CD8-positive, alpha-beta T cell (primary cell): ENCODE measurements at regions of chr1 and their contacts with region 1.

Region 1: GRCh38 chr1:247131236-247131635 is 27.1 kb upstream of the ZNF669 start:
- DNase-seq: no peak
- ATAC-seq: no peak
- H3K4me3 ChIP-seq: no peak overlapping the region
- H3K4me3 Mint-ChIP-seq: no peak overlapping the region
- H3K27ac ChIP-seq: no peak overlapping the region
- H3K27ac Mint-ChIP-seq: no peak overlapping the region
- H3K4me1 ChIP-seq: peaks cover 4% of the 10 kb centered on the region
- H3K4me1 Mint-ChIP-seq: peaks cover 6% of the 10 kb centered on the region
- H3K27me3 ChIP-seq: no peaks in the 10 kb centered on the region
- H3K27me3 Mint-ChIP-seq: no peaks in the 10 kb centered on the region
- CTCF ChIP-seq: no peak

Region 2: GRCh38 chr1:247007511-247008405 is 123.5 kb before region 1 on chr1 and contains the start of gene ZNF695:
- CTCF ChIA-PET with region 1: no interaction called
- POLR2A ChIA-PET with region 1: no interaction called
- intact Hi-C with region 1: no loop called
- DNase-seq: peak; percentile 2 to 70 (median 34)
- ATAC-seq: peak; percentile 96
- H3K4me3 ChIP-seq: peak within 1 kb of the TSS in 1 of 2 experiments; percentile 37
- H3K4me3 Mint-ChIP-seq: peak within 1 kb of the TSS; percentile 79
- H3K27ac ChIP-seq: no peak within 1 kb of the TSS
- H3K27ac Mint-ChIP-seq: no peak within 1 kb of the TSS
- H3K4me1 ChIP-seq: no peaks in the 10 kb centered on the region
- H3K4me1 Mint-ChIP-seq: peaks cover 4% of the 10 kb centered on the region
- H3K27me3 ChIP-seq: peaks cover 7% of the 10 kb centered on the region in 2 experiments
- H3K27me3 Mint-ChIP-seq: peaks cover 38% of the 10 kb centered on the region
- CTCF ChIP-seq: no peak
- total RNA-seq, gene ZNF695: not detected

Region 3: DNA sequence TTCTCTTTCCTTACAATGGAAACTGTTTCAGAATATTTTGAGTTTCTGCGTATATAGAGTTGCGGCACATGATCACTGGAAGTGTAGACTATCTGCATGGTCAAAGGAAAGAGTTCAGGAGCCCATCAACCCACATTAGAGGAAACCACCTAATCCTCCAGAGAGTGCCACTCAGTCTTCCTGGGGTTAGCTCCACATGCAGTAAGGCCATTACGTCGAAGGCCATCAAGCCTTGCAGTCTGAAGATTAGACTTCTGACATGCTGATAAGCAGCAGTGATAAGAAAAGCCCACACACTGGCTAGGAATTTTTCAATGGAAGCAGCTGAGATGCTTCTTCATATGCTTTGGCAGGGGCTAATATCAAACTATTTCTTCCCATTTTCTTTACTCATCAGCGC is 34.7 kb before region 1 on chr1:
- CTCF ChIA-PET with region 1: no interaction called
- POLR2A ChIA-PET with region 1: no interaction called
- intact Hi-C with region 1: no loop called
- DNase-seq: peak in 1 of 9 experiments; percentile 35
- ATAC-seq: no peak
- H3K4me3 ChIP-seq: no peak overlapping the region
- H3K4me3 Mint-ChIP-seq: no peak overlapping the region
- H3K27ac ChIP-seq: no peak overlapping the region
- H3K27ac Mint-ChIP-seq: no peak overlapping the region
- H3K4me1 ChIP-seq: no peaks in the 10 kb centered on the region
- H3K4me1 Mint-ChIP-seq: no peaks in the 10 kb centered on the region
- H3K27me3 ChIP-seq: no peaks in the 10 kb centered on the region
- H3K27me3 Mint-ChIP-seq: no peaks in the 10 kb centered on the region
- CTCF ChIP-seq: no peak

Region 4: DNA sequence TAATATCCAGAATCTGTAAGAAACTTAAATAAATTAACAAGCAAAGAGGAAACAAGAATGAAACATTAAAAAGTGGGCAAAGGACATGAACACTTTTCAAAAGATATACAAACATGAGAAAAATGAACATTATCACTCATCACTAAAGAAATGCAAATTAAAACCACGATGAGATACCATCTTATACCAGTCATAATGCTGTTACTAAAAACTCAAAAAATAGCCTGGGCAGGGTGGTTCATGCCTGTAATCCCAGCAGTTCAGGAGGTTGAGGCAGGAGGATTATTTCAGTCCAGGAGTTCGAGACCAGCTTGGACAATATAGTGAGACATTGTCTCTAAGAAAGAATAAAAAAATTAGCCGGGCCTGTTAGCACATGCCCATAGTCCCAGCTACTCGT is 34.4 kb after region 1 on chr1:
- CTCF ChIA-PET with region 1: no interaction called
- POLR2A ChIA-PET with region 1: no interaction called
- intact Hi-C with region 1: loop called (anchors 1 to 2 kb)
- DNase-seq: no peak
- ATAC-seq: no peak
- H3K4me3 ChIP-seq: no peak overlapping the region
- H3K4me3 Mint-ChIP-seq: no peak overlapping the region
- H3K27ac ChIP-seq: no peak overlapping the region
- H3K27ac Mint-ChIP-seq: no peak overlapping the region
- H3K4me1 ChIP-seq: no peaks in the 10 kb centered on the region
- H3K4me1 Mint-ChIP-seq: peaks cover 44% of the 10 kb centered on the region
- H3K27me3 ChIP-seq: no peaks in the 10 kb centered on the region
- H3K27me3 Mint-ChIP-seq: no peaks in the 10 kb centered on the region
- CTCF ChIP-seq: no peak

Region 5: GRCh38 chr1:247172996-247173395 is 41.8 kb after region 1 on chr1:
- CTCF ChIA-PET with region 1: no interaction called
- POLR2A ChIA-PET with region 1: no interaction called
- intact Hi-C with region 1: loop called in 1 of 2 experiments (anchors 2 kb)
- DNase-seq: peak in 1 of 9 experiments; percentile 11
- ATAC-seq: no peak
- H3K4me3 ChIP-seq: no peak overlapping the region
- H3K4me3 Mint-ChIP-seq: no peak overlapping the region
- H3K27ac ChIP-seq: no peak overlapping the region
- H3K27ac Mint-ChIP-seq: no peak overlapping the region
- H3K4me1 ChIP-seq: no peaks in the 10 kb centered on the region
- H3K4me1 Mint-ChIP-seq: peaks cover 19% of the 10 kb centered on the region
- H3K27me3 ChIP-seq: no peaks in the 10 kb centered on the region
- H3K27me3 Mint-ChIP-seq: no peaks in the 10 kb centered on the region
- CTCF ChIP-seq: no peak

Region 6: DNA sequence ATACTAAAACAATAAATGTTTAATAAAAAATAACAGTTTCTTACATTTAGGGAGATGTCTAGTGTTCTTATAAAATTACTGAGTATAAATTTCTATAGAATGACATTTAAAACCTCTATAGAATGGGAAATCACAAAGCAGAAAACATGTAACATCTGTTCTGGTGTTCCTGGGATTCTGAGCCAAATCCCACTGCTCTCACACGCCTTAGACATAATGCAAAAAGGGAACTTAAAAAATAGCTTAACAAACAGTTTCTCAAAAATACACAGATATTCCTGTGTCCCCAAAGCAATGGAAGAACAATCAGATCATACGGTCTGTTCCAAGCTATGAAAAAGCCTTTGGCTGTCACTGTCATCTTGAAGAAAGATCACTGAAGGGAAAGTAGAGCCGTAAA is 67.5 kb after region 1 on chr1:
- CTCF ChIA-PET with region 1: no interaction called
- POLR2A ChIA-PET with region 1: no interaction called
- intact Hi-C with region 1: no loop called
- DNase-seq: no peak
- ATAC-seq: no peak
- H3K4me3 ChIP-seq: no peak overlapping the region
- H3K4me3 Mint-ChIP-seq: no peak overlapping the region
- H3K27ac ChIP-seq: no peak overlapping the region
- H3K27ac Mint-ChIP-seq: no peak overlapping the region
- H3K4me1 ChIP-seq: no peaks in the 10 kb centered on the region
- H3K4me1 Mint-ChIP-seq: peaks cover 19% of the 10 kb centered on the region
- H3K27me3 ChIP-seq: no peaks in the 10 kb centered on the region
- H3K27me3 Mint-ChIP-seq: no peaks in the 10 kb centered on the region
- CTCF ChIP-seq: no peak

Region 7: GRCh38 chr1:247895976-247896375 is 764.7 kb after region 1 on chr1:
- CTCF ChIA-PET with region 1: no interaction called
- POLR2A ChIA-PET with region 1: no interaction called
- intact Hi-C with region 1: no loop called
- DNase-seq: no peak
- ATAC-seq: no peak
- H3K4me3 ChIP-seq: no peak overlapping the region
- H3K4me3 Mint-ChIP-seq: no peak overlapping the region
- H3K27ac ChIP-seq: no peak overlapping the region
- H3K27ac Mint-ChIP-seq: no peak overlapping the region
- H3K4me1 ChIP-seq: no peaks in the 10 kb centered on the region
- H3K4me1 Mint-ChIP-seq: no peaks in the 10 kb centered on the region
- H3K27me3 ChIP-seq: no peaks in the 10 kb centered on the region
- H3K27me3 Mint-ChIP-seq: no peaks in the 10 kb centered on the region
- CTCF ChIP-seq: no peak